ENCODE measurements at regions of chr19 and their contacts with region 1.

Region 1: GRCh38 chr19:3466635-3467034 is 13.7 kb downstream of the SMIM24 start:
- DNase-seq: no peak

Region 2: GRCh38 chr19:3609779-3610719 is 143.4 kb after region 1 on chr19:
- intact Hi-C with region 1: loop called in 1 of 2 experiments (anchors 1 kb)
- DNase-seq: no peak

Measured in posterior vena cava (tissue), 2 donors.